Thyroid gland (tissue), 4 donors: ENCODE measurements at regions of chr12 and their contacts with region 1.

Region 1: DNA sequence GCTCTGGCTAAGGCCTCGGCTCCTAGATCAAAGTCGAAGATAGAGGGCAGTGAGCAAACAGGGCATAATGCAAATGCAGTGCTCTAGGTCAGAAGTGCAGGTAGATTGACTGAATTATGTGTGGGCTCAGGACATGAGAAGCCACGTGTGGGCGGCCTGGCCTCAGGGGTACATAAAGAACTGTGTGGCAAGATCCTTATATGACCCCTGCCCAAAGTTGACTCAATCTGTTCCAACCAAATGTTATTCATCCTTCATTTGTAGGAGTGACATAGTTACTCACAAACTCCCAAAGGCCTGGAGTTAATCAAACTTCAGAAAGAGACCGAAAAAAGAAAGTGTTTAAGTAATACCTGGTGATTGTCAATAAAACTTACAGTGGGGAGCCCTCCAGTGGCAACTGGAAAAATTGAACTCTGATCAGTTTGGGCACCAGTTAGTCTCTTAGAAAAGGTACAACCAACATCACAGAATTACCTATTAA is 150.4 kb upstream of the FAR2 start:
- DNase-seq: peak in 1 of 2 donors; percentile 18
- H3K4me3 ChIP-seq: no peak overlapping the region
- H3K27ac ChIP-seq: no peak overlapping the region
- H3K4me1 ChIP-seq: no peaks in the 10 kb centered on the region
- H3K27me3 ChIP-seq: no peaks in the 10 kb centered on the region
- CTCF ChIP-seq: peak in 3 of 6 experiments; percentile 25 to 38 (median 34)
- POLR2A ChIP-seq: no peak

Region 2: DNA sequence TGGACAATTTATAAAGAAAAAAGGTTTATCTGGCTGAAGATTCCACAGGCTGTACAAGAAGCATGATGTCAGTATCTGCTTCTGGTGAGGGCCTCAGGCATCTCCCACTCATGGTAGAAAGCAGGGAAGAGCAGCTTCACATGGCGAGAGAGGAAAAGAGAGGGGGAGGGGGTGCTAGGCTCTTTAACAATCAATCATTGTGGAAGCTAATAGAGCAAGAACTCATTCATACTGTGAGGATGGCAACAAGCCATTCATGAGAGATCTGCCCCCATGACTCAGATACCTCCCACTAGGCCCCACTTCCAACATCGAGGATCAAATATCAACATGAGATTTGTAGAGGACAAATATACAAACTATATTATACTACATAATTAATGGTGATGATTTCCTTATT is 211.5 kb before region 1 on chr12:
- intact Hi-C with region 1: no loop called
- DNase-seq: no peak
- H3K4me3 ChIP-seq: no peak overlapping the region
- H3K27ac ChIP-seq: no peak overlapping the region
- H3K4me1 ChIP-seq: no peaks in the 10 kb centered on the region
- H3K27me3 ChIP-seq: no peaks in the 10 kb centered on the region
- CTCF ChIP-seq: no peak
- POLR2A ChIP-seq: no peak

Region 3: DNA sequence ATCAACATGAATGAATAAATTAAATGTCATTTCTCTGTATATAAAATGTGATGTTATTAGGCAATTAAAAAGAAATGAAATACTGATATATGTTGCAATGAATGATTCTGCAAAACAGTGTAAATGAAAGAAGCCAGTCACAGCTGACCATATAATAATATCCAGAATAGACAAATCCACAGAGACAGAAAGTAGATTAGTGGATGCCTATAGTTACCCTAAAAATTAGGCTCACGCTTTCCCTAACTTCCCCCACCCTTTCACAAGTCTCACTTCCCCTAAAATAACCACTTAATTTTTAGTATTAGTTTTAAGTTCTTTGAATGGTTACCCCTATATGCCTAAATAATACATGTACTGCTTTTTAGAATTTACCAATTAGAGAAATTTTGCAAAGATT is 198.6 kb before region 1 on chr12:
- intact Hi-C with region 1: no loop called
- DNase-seq: no peak
- H3K4me3 ChIP-seq: no peak overlapping the region
- H3K27ac ChIP-seq: no peak overlapping the region
- H3K4me1 ChIP-seq: no peaks in the 10 kb centered on the region
- H3K27me3 ChIP-seq: no peaks in the 10 kb centered on the region
- CTCF ChIP-seq: no peak
- POLR2A ChIP-seq: no peak

Region 4: DNA sequence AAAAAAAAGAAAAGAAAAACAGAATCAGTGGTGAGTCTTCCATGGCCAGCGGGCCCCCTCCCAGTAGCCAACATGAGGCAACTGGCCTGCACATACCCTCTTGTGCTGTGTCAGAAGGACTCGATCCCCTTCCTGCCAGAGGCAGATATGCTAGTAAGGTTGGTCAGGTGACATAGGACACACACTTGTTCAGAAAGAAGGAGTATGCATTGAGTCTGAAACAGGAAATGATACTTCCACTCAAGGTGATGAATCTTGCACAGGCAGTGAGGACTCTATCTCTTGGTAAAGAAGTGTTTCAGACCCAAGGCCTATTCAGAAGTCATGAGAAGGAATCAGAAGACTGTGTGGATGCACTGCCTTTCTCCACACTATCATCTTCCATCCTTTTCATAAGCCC is 119.3 kb before region 1 on chr12:
- intact Hi-C with region 1: loop called (anchors 5 kb)
- DNase-seq: no peak
- H3K4me3 ChIP-seq: no peak overlapping the region
- H3K27ac ChIP-seq: no peak overlapping the region
- H3K4me1 ChIP-seq: no peaks in the 10 kb centered on the region
- H3K27me3 ChIP-seq: no peaks in the 10 kb centered on the region
- CTCF ChIP-seq: no peak
- POLR2A ChIP-seq: no peak

Region 5: DNA sequence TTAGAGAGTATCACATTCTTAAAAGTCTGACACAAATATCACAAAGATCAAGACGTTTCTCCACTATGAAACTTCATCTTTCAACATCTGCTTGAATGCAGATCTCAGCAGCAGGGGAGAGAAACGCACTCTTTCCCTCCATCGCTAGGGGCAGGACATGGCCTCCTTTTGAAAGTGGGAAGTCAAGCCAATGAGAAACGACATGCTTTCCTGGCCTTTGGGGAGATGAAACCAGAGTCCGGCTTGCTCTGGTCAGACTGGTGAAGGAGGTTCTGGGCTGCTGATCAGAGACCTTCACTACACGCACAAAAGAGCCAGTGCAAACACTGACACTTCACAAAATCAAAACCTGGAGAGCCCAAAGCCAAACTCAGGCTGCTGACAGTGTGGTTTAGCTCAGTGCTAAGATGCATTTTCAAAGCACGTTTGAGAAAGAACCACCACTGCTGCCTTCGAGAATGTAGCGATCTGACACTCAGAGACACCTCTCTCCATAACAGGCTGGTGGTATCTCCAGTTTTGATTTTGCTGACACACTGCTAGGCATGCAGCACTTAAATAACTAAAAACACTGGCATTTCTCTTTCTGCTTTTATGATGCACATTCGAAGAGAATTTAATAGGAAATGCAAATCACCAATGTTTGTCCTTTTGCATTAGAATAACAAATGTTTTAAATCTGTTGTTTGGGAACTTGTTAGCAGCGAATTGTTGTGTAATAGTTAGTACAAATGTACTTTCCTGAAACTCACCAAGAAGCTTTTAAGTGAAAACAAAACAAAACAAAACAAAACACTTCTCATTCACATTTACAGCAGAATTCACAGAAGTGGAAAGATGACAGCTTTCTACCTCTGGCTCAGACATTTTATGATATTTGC is 592.7 kb after region 1 on chr12:
- intact Hi-C with region 1: no loop called
- DNase-seq: peak; percentile 26 to 40
- H3K4me3 ChIP-seq: no peak overlapping the region
- H3K27ac ChIP-seq: no peak overlapping the region
- H3K4me1 ChIP-seq: peaks cover 0 to 11% of the 10 kb centered on the region in 2 donors
- H3K27me3 ChIP-seq: no peaks in the 10 kb centered on the region
- CTCF ChIP-seq: peak in 4 of 6 experiments; percentile 13 to 45 (median 28)
- POLR2A ChIP-seq: no peak